GM12878 (cell line): ENCODE measurements at regions of chr2 and their contacts with region 1.

Region 1: DNA sequence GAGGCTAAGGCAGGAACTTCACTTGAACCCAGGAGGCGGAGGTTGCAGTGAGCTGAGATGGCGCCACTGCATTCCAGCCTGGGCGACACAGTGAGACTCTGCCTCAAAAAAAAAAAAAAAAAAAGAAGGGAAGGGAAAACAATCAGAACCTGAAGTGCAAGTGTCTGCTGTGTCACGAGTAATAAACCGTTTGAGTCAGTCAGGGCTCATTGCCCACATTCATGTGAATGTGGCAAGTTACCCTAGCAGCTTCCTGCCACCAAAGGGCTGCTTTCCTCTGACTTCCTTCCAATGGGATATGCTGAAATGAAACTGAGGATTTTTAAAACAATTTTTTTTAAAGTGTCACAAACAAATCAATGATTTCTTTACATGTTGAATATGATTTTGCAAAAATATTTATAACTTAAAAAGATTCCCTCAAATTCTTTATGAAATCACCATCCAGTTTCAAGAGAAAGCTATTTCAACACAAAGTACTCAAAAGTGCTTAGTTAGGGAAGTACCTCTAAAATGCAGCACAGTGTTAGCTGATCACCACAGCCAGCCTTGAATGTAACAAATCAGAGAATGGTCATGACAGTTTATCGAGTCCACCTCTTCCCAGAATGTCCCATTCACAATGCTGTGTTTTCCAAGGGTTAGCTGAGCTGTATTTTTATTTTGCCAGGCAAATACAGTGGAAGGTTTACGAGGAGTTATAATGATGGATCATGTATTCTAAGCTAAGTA is 36.4 kb downstream of the WDSUB1 start:
- DNase-seq: peak; percentile 40
- ATAC-seq: peak; percentile 84
- H3K4me3 ChIP-seq: no peak overlapping the region
- H3K27ac ChIP-seq: peak overlapping the region; percentile 30; the same call in 1 of the 2 replicates
- H3K4me1 ChIP-seq: peaks cover 3% of the 10 kb centered on the region; the same call in 1 of the 2 replicates
- H3K27me3 ChIP-seq: no peaks in the 10 kb centered on the region
- CTCF ChIP-seq: no peak
- EP300 ChIP-seq: peak in 1 of 2 experiments; percentile 28; a peak in 1 of 4 replicates
- POLR2A ChIP-seq: no peak
- RAD21 ChIP-seq: no peak

Region 2: DNA sequence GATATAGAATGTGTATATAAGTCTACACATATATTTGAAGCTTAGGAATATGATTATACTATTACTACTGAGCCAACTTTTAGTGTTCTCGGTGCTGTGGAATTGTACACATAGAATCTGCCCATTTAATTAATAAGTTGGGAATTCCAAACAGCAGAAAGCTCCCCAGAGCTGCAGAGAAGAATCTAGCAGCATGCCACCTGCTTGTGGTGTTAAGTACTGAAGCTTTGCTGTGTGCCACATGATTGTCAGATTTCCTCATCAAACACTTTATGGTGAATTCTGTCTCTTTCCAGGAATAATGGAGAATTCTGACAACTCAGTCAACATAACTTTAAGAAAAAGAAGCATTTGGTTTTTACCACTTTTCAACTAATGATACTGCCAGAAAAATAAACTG is 81.4 kb before region 1 on chr2:
- CTCF ChIA-PET with region 1: no interaction called
- POLR2A ChIA-PET with region 1: no interaction called
- RAD21 ChIA-PET with region 1: no interaction called
- SMC1A ChIA-PET with region 1: no interaction called
- in situ Hi-C with region 1: no loop called
- intact Hi-C with region 1: no loop called
- DNase-seq: no peak
- ATAC-seq: no peak
- H3K4me3 ChIP-seq: no peak overlapping the region
- H3K27ac ChIP-seq: no peak overlapping the region
- H3K4me1 ChIP-seq: no peaks in the 10 kb centered on the region
- H3K27me3 ChIP-seq: no peaks in the 10 kb centered on the region
- CTCF ChIP-seq: no peak
- EP300 ChIP-seq: no peak
- POLR2A ChIP-seq: no peak
- RAD21 ChIP-seq: no peak

Region 3: GRCh38 chr2:159201360-159202063 is 48.6 kb before region 1 on chr2:
- CTCF ChIA-PET with region 1: no interaction called
- POLR2A ChIA-PET with region 1: no interaction called
- RAD21 ChIA-PET with region 1: interaction called, 3 read pairs
- SMC1A ChIA-PET with region 1: interaction called, 12 read pairs
- in situ Hi-C with region 1: no loop called
- intact Hi-C with region 1: no loop called
- DNase-seq: peak; percentile 42
- ATAC-seq: peak; percentile 98
- H3K4me3 ChIP-seq: no peak overlapping the region
- H3K27ac ChIP-seq: peak overlapping the region; percentile 16; the same call in 1 of the 2 replicates
- H3K4me1 ChIP-seq: peaks cover 13% of the 10 kb centered on the region
- H3K27me3 ChIP-seq: no peaks in the 10 kb centered on the region
- CTCF ChIP-seq: no peak
- EP300 ChIP-seq: peak in 1 of 2 experiments; percentile 71; a peak in 2 of 4 replicates
- POLR2A ChIP-seq: no peak
- RAD21 ChIP-seq: no peak